Endothelial cell of umbilical vein (primary cell): ENCODE measurements at regions of chrX and their contacts with region 1.

Region 1: DNA sequence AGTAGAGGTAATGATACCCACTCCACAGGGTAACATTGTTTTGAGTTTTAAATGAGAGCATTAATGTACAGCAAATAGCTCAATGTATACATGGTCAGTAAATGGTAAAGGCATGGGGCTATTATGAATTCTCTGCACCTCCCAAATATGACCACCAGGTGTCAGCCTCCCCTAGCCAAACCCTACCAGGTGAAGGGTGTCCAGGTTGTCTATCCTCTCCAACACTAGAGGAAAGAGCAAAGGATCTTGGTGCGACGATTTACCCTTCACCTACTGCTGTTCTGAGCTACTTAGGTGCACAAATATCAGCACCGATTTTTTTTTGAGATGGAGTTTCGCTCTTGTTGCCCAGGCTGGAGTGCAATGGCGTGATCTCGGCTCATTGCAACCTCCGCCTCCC is 26.5 kb upstream of the XIAP start:
- DNase-seq: peak; percentile 55
- H3K4me3 ChIP-seq: no peak overlapping the region
- H3K27ac ChIP-seq: no peak overlapping the region
- H3K4me1 ChIP-seq: no peaks in the 10 kb centered on the region
- H3K27me3 ChIP-seq: no peaks in the 10 kb centered on the region
- CTCF ChIP-seq: peak; percentile 54 to 56
- POLR2A ChIP-seq: no peak

Region 2: DNA sequence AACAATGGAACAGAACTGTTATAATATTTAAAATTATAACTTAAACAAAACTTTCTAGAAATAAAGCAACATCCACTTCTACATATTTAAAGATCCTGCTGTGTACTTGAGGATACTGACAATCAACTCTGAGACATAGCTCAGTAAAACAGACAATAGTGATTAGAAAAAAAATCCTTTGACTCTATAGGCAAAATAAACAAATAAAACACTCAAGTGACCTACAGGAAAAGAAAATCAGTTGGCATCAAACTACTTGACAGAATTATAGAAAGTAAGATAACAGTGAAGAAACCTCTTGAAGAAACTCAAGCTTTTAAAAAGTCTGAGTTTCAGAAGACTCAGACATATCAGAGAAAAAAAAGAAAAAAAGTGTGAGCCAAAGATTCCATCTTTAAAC is 44.6 kb before region 1 on chrX:
- CTCF ChIA-PET with region 1: interaction called, 8 read pairs
- POLR2A ChIA-PET with region 1: no interaction called
- dilution Hi-C with region 1: no loop called
- intact Hi-C with region 1: loop called (anchors 5 kb)
- DNase-seq: no peak
- H3K4me3 ChIP-seq: no peak overlapping the region
- H3K27ac ChIP-seq: no peak overlapping the region
- H3K4me1 ChIP-seq: no peaks in the 10 kb centered on the region
- H3K27me3 ChIP-seq: no peaks in the 10 kb centered on the region
- CTCF ChIP-seq: no peak
- POLR2A ChIP-seq: no peak

Region 3: DNA sequence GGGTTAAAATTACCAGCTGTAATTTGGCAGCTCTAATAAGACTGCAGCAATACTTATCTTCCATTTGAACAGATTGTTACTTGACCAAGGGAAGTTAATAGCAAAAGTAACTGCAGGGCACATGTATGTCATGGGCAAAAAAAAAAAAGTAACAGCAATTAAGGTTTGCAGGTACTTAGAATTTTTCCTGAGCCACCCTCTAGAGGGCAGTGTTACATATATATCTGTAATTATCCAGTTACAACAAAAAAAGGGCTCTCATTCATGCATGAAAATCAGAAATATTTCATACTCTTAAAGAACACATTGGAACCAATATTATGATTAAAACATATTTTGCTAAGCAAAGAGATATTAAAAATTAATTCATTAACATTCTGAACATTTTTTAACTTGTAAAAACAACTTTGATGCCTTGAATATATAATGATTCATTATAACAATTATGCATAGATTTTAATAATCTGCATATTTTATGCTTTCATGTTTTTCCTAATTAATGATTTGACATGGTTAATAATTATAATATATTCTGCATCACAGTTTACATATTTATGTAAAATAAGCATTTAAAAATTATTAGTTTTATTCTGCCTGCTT is 51.5 kb after region 1 on chrX:
- CTCF ChIA-PET with region 1: interaction called, 32 read pairs
- POLR2A ChIA-PET with region 1: no interaction called
- dilution Hi-C with region 1: no loop called
- intact Hi-C with region 1: loop called (anchors 1 kb)
- DNase-seq: peak; percentile 52
- H3K4me3 ChIP-seq: no peak overlapping the region
- H3K27ac ChIP-seq: no peak overlapping the region
- H3K4me1 ChIP-seq: no peaks in the 10 kb centered on the region
- H3K27me3 ChIP-seq: no peaks in the 10 kb centered on the region
- CTCF ChIP-seq: peak; percentile 20 to 25
- POLR2A ChIP-seq: no peak

Region 4: GRCh38 chrX:123976706-123977316 is 143.4 kb after region 1 on chrX:
- CTCF ChIA-PET with region 1: interaction called, 48 read pairs
- POLR2A ChIA-PET with region 1: interaction called, 3 read pairs
- dilution Hi-C with region 1: no loop called
- intact Hi-C with region 1: no loop called
- DNase-seq: peak; percentile 57
- H3K4me3 ChIP-seq: no peak overlapping the region
- H3K27ac ChIP-seq: no peak overlapping the region
- H3K4me1 ChIP-seq: peaks cover 12% of the 10 kb centered on the region
- H3K27me3 ChIP-seq: no peaks in the 10 kb centered on the region
- CTCF ChIP-seq: no peak
- POLR2A ChIP-seq: no peak